Caco-2 (cell line): ENCODE measurements at regions of chr2 and their contacts with region 1.

Region 1: DNA sequence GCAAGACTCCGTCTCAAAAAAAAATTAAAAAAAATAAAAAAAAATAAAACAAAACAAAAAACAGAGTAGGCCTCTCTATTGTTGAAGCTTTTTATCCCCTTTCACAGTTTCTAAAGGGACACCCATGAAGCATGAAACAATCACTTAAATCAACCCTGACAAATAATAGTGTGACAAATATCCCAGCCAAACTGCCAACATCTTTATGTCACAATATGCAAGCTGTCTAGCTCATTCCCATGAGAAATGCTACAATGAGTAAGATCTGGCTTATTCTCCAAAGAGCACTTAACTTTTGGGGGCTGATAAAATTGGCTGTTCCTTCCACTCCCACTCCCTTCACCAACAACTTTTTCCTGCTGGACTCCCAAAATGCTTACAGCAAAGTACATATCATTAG is 21.7 kb upstream of the ABCA12 start:
- DNase-seq: no peak
- H3K4me3 ChIP-seq: no peak overlapping the region
- H3K4me3 Mint-ChIP-seq: no peak overlapping the region
- H3K27ac Mint-ChIP-seq: no peak overlapping the region
- H3K4me1 ChIP-seq: no peaks in the 10 kb centered on the region
- H3K4me1 Mint-ChIP-seq: no peaks in the 10 kb centered on the region
- H3K27me3 ChIP-seq: no peaks in the 10 kb centered on the region
- H3K27me3 Mint-ChIP-seq: peaks cover 4% of the 10 kb centered on the region
- CTCF ChIP-seq: no peak

Region 2: DNA sequence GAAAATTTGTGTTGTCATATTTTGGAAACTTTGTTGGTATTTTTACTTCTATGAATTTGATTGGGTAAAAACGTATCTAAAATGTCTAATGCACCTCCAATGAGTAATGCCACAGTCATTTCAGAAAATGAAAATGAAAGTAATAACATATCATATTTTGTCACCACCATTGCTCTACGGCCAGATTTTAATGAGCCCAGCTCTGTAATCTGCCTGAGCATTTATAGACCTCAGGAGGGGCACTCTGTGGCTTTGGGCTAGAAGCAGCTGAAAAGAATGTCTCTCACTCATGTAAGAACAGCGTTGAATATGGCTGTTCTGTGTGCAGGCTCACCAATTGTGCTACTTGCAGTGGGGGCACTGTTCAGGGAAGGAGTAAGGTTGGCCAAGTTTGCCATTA is 11.1 kb after region 1 on chr2:
- CTCF ChIA-PET with region 1: no interaction called
- POLR2A ChIA-PET with region 1: no interaction called
- intact Hi-C with region 1: loop called (anchors 1 kb)
- DNase-seq: no peak
- H3K4me3 ChIP-seq: no peak overlapping the region
- H3K4me3 Mint-ChIP-seq: no peak overlapping the region
- H3K27ac Mint-ChIP-seq: no peak overlapping the region
- H3K4me1 ChIP-seq: no peaks in the 10 kb centered on the region
- H3K4me1 Mint-ChIP-seq: no peaks in the 10 kb centered on the region
- H3K27me3 ChIP-seq: no peaks in the 10 kb centered on the region
- H3K27me3 Mint-ChIP-seq: no peaks in the 10 kb centered on the region
- CTCF ChIP-seq: no peak

Region 3: GRCh38 chr2:215188078-215188477 is 28.0 kb after region 1 on chr2:
- CTCF ChIA-PET with region 1: no interaction called
- POLR2A ChIA-PET with region 1: no interaction called
- intact Hi-C with region 1: no loop called
- DNase-seq: no peak
- H3K4me3 ChIP-seq: no peak overlapping the region
- H3K4me3 Mint-ChIP-seq: no peak overlapping the region
- H3K27ac Mint-ChIP-seq: no peak overlapping the region
- H3K4me1 ChIP-seq: no peaks in the 10 kb centered on the region
- H3K4me1 Mint-ChIP-seq: no peaks in the 10 kb centered on the region
- H3K27me3 ChIP-seq: no peaks in the 10 kb centered on the region
- H3K27me3 Mint-ChIP-seq: peaks cover 2% of the 10 kb centered on the region
- CTCF ChIP-seq: no peak